IMR-90 (cell line): ENCODE measurements at regions of chr1 and their contacts with region 1.

Region 1: DNA sequence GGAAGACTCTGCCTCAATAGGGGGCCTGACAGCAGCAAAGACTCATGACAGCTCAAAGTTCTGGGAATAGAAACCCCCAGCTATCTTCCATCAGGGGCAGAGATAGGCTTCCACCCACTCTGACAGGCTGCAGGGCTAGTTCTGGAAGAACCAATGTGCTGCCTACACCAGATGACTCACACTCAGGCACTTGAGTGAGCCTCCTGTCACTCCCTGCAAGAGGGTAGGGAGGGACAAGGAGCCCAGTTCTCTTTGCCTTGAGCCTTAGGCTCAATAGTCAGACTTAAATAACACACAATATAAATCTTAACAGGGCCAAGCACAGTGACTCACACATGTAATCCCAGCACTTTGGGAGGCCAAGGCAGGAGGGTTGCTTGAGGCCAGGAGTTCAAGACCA is 386.4 kb downstream of the HHAT start:
- DNase-seq: no peak
- ATAC-seq: no peak
- H3K4me3 ChIP-seq: no peak overlapping the region
- H3K27ac ChIP-seq: no peak overlapping the region
- H3K4me1 ChIP-seq: no peaks in the 10 kb centered on the region
- H3K27me3 ChIP-seq: no peaks in the 10 kb centered on the region
- CTCF ChIP-seq: no peak
- POLR2A ChIP-seq: no peak
- RAD21 ChIP-seq: no peak

Region 2: GRCh38 chr1:211118407-211119102 is 403.5 kb after region 1 on chr1:
- CTCF ChIA-PET with region 1: no interaction called
- POLR2A ChIA-PET with region 1: no interaction called
- dilution Hi-C with region 1: no loop called
- in situ Hi-C with region 1: no loop called
- intact Hi-C with region 1: loop called (anchors 5 kb)
- DNase-seq: peak; percentile 39
- ATAC-seq: peak; percentile 92
- H3K4me3 ChIP-seq: no peak overlapping the region
- H3K27ac ChIP-seq: no peak overlapping the region
- H3K4me1 ChIP-seq: no peaks in the 10 kb centered on the region
- H3K27me3 ChIP-seq: no peaks in the 10 kb centered on the region
- CTCF ChIP-seq: 0 out of 2 replicates have a peak, but pooled peaks have one; percentile 8
- POLR2A ChIP-seq: no peak
- RAD21 ChIP-seq: no peak